Ovary (tissue), 10 donors: ENCODE measurements at regions of chr16 and their contacts with region 1.

Region 1: GRCh38 chr16:1073566-1074378 is 1.2 kb downstream of the SSTR5 start:
- DNase-seq: no peak
- H3K4me3 ChIP-seq: no peak overlapping the region
- H3K27ac ChIP-seq: no peak overlapping the region
- H3K4me1 ChIP-seq: no peaks in the 10 kb centered on the region
- H3K27me3 ChIP-seq: no peaks in the 10 kb centered on the region
- CTCF ChIP-seq: no peak
- EP300 ChIP-seq: no peak
- POLR2A ChIP-seq: no peak

Region 2: DNA sequence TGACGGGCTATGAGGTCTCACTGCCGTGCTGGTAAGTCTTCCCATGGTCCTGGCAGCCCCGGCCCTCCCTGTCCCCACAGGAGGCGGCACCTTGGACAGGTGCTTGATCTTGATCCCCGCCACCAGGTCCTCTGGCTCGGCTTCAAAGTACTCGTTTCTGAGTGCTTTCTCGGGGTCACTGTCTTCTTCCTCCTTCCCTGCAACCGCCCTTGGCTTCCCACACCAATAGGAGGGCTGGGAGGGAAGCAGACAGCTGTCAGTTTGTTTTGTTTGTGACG is 1226.1 kb after region 1 on chr16:
- intact Hi-C with region 1: loop called in 1 of 4 experiments (anchors 5 kb)
- DNase-seq: no peak
- H3K4me3 ChIP-seq: no peak overlapping the region
- H3K27ac ChIP-seq: no peak overlapping the region
- H3K4me1 ChIP-seq: peaks cover 2% of the 10 kb centered on the region
- H3K27me3 ChIP-seq: no peaks in the 10 kb centered on the region
- CTCF ChIP-seq: no peak
- EP300 ChIP-seq: no peak
- POLR2A ChIP-seq: no peak